B cell (primary cell): ENCODE measurements at regions of chr12 and their contacts with region 1.

Region 1: GRCh38 chr12:67592216-67593011 is 56.1 kb upstream of the DYRK2 start:
- DNase-seq: peak; percentile 37
- ATAC-seq: peak; percentile 65
- H3K4me3 ChIP-seq: no peak overlapping the region
- H3K4me3 Mint-ChIP-seq: peak overlapping the region; percentile 8
- H3K27ac ChIP-seq: peak overlapping the region in 1 of 2 donors; percentile 26
- H3K27ac Mint-ChIP-seq: peak overlapping the region; percentile 59
- H3K4me1 ChIP-seq: peaks cover 19 to 21% of the 10 kb centered on the region in 2 donors
- H3K4me1 Mint-ChIP-seq: peaks cover 31% of the 10 kb centered on the region
- H3K27me3 ChIP-seq: no peaks in the 10 kb centered on the region
- H3K27me3 Mint-ChIP-seq: peaks cover 1% of the 10 kb centered on the region
- CTCF ChIP-seq: peak; percentile 50

Region 2: DNA sequence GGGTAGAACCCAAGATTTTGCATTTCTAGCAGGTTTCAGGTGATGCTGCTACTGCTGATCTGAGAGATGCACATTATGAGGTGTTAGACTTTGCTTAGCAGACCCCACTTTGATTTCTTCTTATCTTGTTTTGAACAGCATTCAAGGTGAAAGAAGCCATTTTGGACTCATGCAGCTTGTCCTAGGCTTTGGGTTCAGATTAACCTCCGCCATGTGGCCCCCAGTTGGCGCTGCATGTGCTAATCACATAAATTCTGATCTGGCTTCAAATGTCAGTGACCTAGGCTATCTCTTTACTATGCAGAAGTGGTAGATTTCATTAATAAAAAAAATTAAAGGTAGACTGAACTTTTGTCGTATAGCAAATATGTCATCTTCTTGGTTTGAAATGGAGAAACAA is 33.6 kb before region 1 on chr12:
- CTCF ChIA-PET with region 1: no interaction called
- POLR2A ChIA-PET with region 1: no interaction called
- intact Hi-C with region 1: loop called (anchors 5 kb)
- DNase-seq: no peak
- ATAC-seq: no peak
- H3K4me3 ChIP-seq: no peak overlapping the region
- H3K4me3 Mint-ChIP-seq: no peak overlapping the region
- H3K27ac ChIP-seq: no peak overlapping the region
- H3K27ac Mint-ChIP-seq: no peak overlapping the region
- H3K4me1 ChIP-seq: peaks cover 4 to 11% of the 10 kb centered on the region in 2 donors
- H3K4me1 Mint-ChIP-seq: peaks cover 11% of the 10 kb centered on the region
- H3K27me3 ChIP-seq: no peaks in the 10 kb centered on the region
- H3K27me3 Mint-ChIP-seq: peaks cover 7% of the 10 kb centered on the region
- CTCF ChIP-seq: no peak